ENCODE measurements at regions of chr6 and their contacts with region 1.

Region 1: DNA sequence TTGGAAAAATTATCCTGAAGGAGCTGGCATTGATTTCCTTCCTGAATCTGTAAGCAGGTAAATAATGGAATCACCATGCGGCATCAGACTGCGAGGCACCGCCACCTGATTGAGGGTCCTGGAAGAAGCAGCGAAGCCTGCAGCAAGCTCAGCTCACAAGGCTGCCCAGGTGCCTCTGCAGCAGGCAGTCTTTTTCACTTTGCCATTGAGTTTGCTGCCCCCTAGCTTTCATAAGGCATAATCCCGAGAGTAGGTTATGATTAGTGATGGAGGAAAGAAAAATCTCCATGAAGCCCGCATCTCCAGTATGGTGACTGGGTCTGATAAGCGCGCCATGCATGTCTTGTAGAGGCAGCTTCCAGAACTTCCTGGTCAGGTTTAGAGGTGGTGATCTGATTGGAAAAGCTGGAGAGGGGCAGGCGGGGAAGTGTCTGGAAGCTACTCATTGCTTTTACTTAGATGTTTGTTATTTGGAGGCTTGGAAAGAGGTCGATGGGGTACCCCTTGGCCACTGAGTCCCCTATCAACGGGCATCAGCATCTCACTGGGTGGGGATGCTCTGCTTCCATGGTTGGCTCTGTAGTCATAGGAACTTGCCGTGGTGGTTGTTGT is 26.7 kb downstream of the IYD start:
- DNase-seq: no peak
- ATAC-seq: peak; percentile 79
- H3K4me3 Mint-ChIP-seq: no peak overlapping the region
- H3K27ac Mint-ChIP-seq: no peak overlapping the region
- H3K4me1 Mint-ChIP-seq: no peaks in the 10 kb centered on the region
- H3K27me3 Mint-ChIP-seq: peaks cover 17% of the 10 kb centered on the region
- CTCF ChIP-seq: no peak

Region 2: GRCh38 chr6:150068720-150069648 is 326.5 kb before region 1 on chr6 and contains the start of gene ULBP3:
- CTCF ChIA-PET with region 1: interaction called, 13 read pairs
- POLR2A ChIA-PET with region 1: no interaction called
- intact Hi-C with region 1: no loop called
- DNase-seq: peak; percentile 64
- ATAC-seq: peak; percentile 92
- H3K4me3 Mint-ChIP-seq: peak within 1 kb of the TSS; percentile 84
- H3K27ac Mint-ChIP-seq: peak within 1 kb of the TSS; percentile 7
- H3K4me1 Mint-ChIP-seq: peaks cover 22% of the 10 kb centered on the region
- H3K27me3 Mint-ChIP-seq: peaks cover 18% of the 10 kb centered on the region
- CTCF ChIP-seq: no peak
- total RNA-seq, gene ULBP3: 0.46 and 0.80 TPM in 2 replicates

Region 3: GRCh38 chr6:150079604-150080003 is 315.9 kb before region 1 on chr6:
- CTCF ChIA-PET with region 1: interaction called, 72 read pairs
- POLR2A ChIA-PET with region 1: no interaction called
- intact Hi-C with region 1: loop called (anchors 1 kb)
- DNase-seq: no peak
- ATAC-seq: no peak
- H3K4me3 Mint-ChIP-seq: no peak overlapping the region
- H3K27ac Mint-ChIP-seq: no peak overlapping the region
- H3K4me1 Mint-ChIP-seq: peaks cover 2% of the 10 kb centered on the region
- H3K27me3 Mint-ChIP-seq: peaks cover 48% of the 10 kb centered on the region
- CTCF ChIP-seq: no peak

Region 4: DNA sequence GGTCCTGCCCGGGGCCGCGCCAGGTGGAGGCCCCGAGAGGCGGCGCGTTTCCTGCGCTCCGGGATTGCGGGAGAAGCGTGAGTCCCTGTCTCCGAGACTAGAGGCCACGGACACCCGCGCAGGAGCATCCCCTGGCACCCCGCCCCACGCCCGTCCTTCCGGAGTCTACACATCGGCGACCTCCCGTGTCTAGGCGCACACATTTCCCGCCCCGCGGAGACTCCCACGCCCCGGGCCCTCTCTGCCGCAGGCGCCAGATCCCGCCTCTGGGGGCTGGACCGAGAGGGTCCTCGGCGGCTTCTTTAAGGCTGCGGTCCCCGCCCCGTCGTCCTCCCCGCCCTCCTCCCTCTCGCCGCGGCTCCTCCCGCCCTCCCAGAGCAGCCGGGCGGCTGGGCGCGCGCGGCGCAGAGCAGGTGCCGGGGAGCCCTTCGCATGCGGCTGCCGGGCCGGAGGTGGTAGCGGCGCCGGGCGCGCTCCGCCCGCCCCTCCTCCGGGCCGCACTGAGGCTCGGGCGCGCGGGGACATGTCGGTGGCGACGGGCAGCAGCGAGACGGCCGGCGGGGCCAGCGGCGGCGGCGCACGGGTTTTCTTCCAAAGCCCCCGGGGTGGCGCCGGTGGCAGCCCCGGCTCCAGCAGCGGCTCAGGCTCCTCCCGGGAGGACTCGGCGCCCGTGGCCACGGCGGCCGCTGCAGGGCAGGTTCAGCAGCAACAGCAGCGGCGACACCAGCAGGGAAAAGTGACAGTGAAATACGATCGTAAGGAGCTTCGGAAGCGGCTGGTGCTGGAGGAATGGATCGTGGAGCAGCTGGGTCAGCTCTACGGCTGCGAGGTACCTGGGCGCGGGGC is 252.6 kb before region 1 on chr6 and contains the start of gene PPP1R14C:
- CTCF ChIA-PET with region 1: no interaction called
- POLR2A ChIA-PET with region 1: no interaction called
- intact Hi-C with region 1: loop called (anchors 5 kb)
- DNase-seq: peak; percentile 26
- ATAC-seq: peak; percentile 57
- H3K4me3 Mint-ChIP-seq: peak within 1 kb of the TSS; percentile 65
- H3K27ac Mint-ChIP-seq: no peak within 1 kb of the TSS
- H3K4me1 Mint-ChIP-seq: peaks cover 27% of the 10 kb centered on the region
- H3K27me3 Mint-ChIP-seq: peaks cover 57% of the 10 kb centered on the region
- CTCF ChIP-seq: no peak
- total RNA-seq, gene PPP1R14C: 0.11 and 0.32 TPM in 2 replicates

Region 5: GRCh38 chr6:150408842-150409241 is 13.3 kb after region 1 on chr6:
- CTCF ChIA-PET with region 1: interaction called, 10 read pairs
- POLR2A ChIA-PET with region 1: no interaction called
- intact Hi-C with region 1: no loop called
- DNase-seq: no peak
- ATAC-seq: no peak
- H3K4me3 Mint-ChIP-seq: no peak overlapping the region
- H3K27ac Mint-ChIP-seq: no peak overlapping the region
- H3K4me1 Mint-ChIP-seq: peaks cover 6% of the 10 kb centered on the region
- H3K27me3 Mint-ChIP-seq: peaks cover 29% of the 10 kb centered on the region
- CTCF ChIP-seq: no peak

Region 6: DNA sequence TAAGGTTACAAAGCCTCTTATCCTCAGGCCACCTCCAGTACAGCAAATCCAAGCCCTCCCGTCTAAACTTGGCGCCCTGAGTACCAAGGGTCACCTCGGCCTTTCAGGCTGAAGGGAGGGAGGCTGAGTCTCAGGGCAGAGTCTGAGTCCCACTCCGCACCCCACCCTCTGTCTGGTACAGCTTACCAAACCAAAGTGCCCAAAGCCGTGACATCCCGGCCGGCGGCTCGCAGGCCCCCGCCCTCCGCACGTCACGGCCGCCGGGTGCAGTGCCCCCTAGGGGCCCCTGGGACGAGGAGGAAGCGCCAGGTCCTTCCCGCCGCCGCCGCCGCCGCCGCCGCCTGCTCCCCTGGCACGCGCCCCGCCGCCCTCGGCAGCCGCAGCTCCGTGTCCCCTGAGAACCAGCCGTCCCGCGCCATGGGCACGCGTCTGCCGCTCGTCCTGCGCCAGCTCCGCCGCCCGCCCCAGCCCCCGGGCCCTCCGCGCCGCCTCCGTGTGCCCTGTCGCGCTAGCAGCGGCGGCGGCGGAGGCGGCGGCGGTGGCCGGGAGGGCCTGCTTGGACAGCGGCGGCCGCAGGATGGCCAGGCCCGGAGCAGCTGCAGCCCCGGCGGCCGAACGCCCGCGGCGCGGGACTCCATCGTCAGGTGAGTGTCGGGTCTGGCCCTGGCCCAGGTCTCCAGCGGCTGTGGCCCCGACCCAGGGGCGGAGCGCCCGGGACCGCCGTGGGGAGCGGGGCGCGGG is 470.1 kb after region 1 on chr6 and contains the start of gene MTHFD1L:
- CTCF ChIA-PET with region 1: no interaction called
- POLR2A ChIA-PET with region 1: no interaction called
- intact Hi-C with region 1: no loop called
- DNase-seq: peak; percentile 78
- ATAC-seq: peak; percentile 77
- H3K4me3 Mint-ChIP-seq: peak within 1 kb of the TSS; percentile 90
- H3K27ac Mint-ChIP-seq: peak within 1 kb of the TSS; percentile 79
- H3K4me1 Mint-ChIP-seq: peaks cover 23% of the 10 kb centered on the region
- H3K27me3 Mint-ChIP-seq: peaks cover 2% of the 10 kb centered on the region
- CTCF ChIP-seq: no peak
- total RNA-seq, gene MTHFD1L: 56.4 and 60.4 TPM in 2 replicates

Measured in activated B cell treated with CpG ODN at 0.5 μM for 24 hours (primary cell).